Lower leg skin (tissue), 4 donors: ENCODE measurements at regions of chr15 and their contacts with region 1.

Region 1: GRCh38 chr15:77369168-77369567 is 50.7 kb downstream of the PEAK1 start:
- DNase-seq: no peak
- H3K4me3 ChIP-seq: no peak overlapping the region
- CTCF ChIP-seq: no peak
- POLR2A ChIP-seq: no peak

Region 2: DNA sequence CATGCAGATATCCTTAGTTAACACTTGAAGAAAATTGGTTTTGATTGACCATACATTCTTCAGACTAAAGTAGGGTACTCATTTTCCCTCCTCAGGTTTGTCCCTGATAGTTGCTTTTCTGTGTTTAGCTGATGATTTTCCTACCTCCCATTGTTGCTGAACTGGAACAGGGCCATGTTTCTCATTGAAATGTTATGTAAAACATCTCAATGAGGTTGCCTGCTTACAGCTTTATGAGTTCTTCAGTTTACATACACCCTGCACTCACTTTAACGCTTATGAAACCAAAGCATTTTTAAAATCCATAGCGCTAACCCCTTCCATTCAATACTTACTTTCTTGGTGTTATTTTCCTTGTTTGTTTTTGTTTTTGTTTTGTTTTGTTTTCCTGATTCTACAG is 113.4 kb after region 1 on chr15:
- intact Hi-C with region 1: loop called (anchors 10 kb)
- DNase-seq: no peak
- H3K4me3 ChIP-seq: no peak overlapping the region
- CTCF ChIP-seq: no peak
- POLR2A ChIP-seq: no peak